GM12878 (cell line): ENCODE measurements at regions of chr12 and their contacts with region 1.

Region 1: DNA sequence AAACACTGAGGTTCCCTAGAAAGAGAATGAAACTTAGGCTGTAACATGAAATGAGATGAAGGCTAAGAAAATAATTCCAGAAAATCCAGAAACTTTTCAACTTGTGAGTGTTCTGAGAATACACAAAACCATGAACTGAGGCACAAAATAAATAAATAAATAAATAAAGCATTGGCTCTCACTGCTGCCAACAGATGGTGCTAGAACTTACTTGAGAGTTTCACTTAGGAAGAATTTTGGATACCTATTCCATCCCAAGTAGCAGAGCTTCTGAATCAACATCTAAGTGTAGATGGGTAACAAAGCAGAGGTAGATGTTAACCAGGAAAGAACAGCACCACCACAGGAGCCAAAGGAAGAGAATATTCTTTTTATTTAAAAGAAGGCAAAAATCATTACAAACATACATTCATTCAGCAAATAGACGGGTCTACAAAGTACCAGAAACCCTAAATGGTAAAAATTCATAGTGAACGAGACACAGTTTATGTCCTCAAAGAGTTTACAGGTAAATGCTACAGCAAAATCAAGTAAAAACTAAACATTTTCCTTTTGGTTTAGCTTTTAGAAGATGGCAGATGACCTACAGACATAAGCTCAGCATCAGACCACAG is 16.7 kb downstream of the EPS8 start:
- DNase-seq: no peak
- ATAC-seq: peak; percentile 4
- H3K4me3 ChIP-seq: no peak overlapping the region
- H3K27ac ChIP-seq: no peak overlapping the region
- H3K4me1 ChIP-seq: no peaks in the 10 kb centered on the region
- H3K27me3 ChIP-seq: no peaks in the 10 kb centered on the region
- CTCF ChIP-seq: peak; percentile 22 to 39 (median 30); a peak in 4 of 6 replicates
- EP300 ChIP-seq: no peak
- POLR2A ChIP-seq: no peak
- RAD21 ChIP-seq: peak; percentile 37; the same call in 1 of the 2 replicates

Region 2: GRCh38 chr12:15590180-15590826 is 182.2 kb before region 1 on chr12:
- CTCF ChIA-PET with region 1: interaction called, 21 read pairs
- POLR2A ChIA-PET with region 1: no interaction called
- RAD21 ChIA-PET with region 1: interaction called, 9 read pairs
- SMC1A ChIA-PET with region 1: interaction called, 11 read pairs
- in situ Hi-C with region 1: no loop called
- intact Hi-C with region 1: loop called (anchors 5 kb)
- DNase-seq: peak; percentile 46
- ATAC-seq: peak; percentile 97
- H3K4me3 ChIP-seq: peak overlapping the region; percentile 46; the same call in 1 of the 2 replicates
- H3K27ac ChIP-seq: no peak overlapping the region
- H3K4me1 ChIP-seq: peaks cover 4% of the 10 kb centered on the region; the same call in 1 of the 2 replicates
- H3K27me3 ChIP-seq: 0 out of 4 replicates have a peak, but pooled peaks cover 0 to 1% of the 10 kb centered on the region in 2 experiments
- CTCF ChIP-seq: peak; percentile 85 to 94 (median 86); a peak in 5 of 6 replicates
- EP300 ChIP-seq: no peak
- POLR2A ChIP-seq: no peak
- RAD21 ChIP-seq: peak; percentile 97

Region 3: GRCh38 chr12:15688202-15688736 is 84.2 kb before region 1 on chr12:
- CTCF ChIA-PET with region 1: interaction called, 4 read pairs
- POLR2A ChIA-PET with region 1: interaction called, 12 read pairs
- RAD21 ChIA-PET with region 1: interaction called, 10 read pairs
- SMC1A ChIA-PET with region 1: interaction called, 11 read pairs
- in situ Hi-C with region 1: no loop called
- intact Hi-C with region 1: loop called (anchors 2 kb)
- DNase-seq: no peak
- ATAC-seq: peak; percentile 85
- H3K4me3 ChIP-seq: no peak overlapping the region
- H3K27ac ChIP-seq: no peak overlapping the region
- H3K4me1 ChIP-seq: 0 out of 2 replicates have a peak, but pooled peaks cover 7% of the 10 kb centered on the region
- H3K27me3 ChIP-seq: no peaks in the 10 kb centered on the region
- CTCF ChIP-seq: no peak
- EP300 ChIP-seq: no peak
- POLR2A ChIP-seq: no peak
- RAD21 ChIP-seq: no peak

Region 4: GRCh38 chr12:15712823-15713660 is 59.5 kb before region 1 on chr12:
- CTCF ChIA-PET with region 1: interaction called, 3 read pairs
- POLR2A ChIA-PET with region 1: interaction called, 5 read pairs
- RAD21 ChIA-PET with region 1: interaction called, 15 read pairs
- SMC1A ChIA-PET with region 1: interaction called, 9 read pairs
- in situ Hi-C with region 1: no loop called
- intact Hi-C with region 1: no loop called
- DNase-seq: no peak
- ATAC-seq: peak; percentile 33
- H3K4me3 ChIP-seq: no peak overlapping the region
- H3K27ac ChIP-seq: no peak overlapping the region
- H3K4me1 ChIP-seq: no peaks in the 10 kb centered on the region
- H3K27me3 ChIP-seq: no peaks in the 10 kb centered on the region
- CTCF ChIP-seq: no peak
- EP300 ChIP-seq: no peak
- POLR2A ChIP-seq: no peak
- RAD21 ChIP-seq: no peak

Region 5: DNA sequence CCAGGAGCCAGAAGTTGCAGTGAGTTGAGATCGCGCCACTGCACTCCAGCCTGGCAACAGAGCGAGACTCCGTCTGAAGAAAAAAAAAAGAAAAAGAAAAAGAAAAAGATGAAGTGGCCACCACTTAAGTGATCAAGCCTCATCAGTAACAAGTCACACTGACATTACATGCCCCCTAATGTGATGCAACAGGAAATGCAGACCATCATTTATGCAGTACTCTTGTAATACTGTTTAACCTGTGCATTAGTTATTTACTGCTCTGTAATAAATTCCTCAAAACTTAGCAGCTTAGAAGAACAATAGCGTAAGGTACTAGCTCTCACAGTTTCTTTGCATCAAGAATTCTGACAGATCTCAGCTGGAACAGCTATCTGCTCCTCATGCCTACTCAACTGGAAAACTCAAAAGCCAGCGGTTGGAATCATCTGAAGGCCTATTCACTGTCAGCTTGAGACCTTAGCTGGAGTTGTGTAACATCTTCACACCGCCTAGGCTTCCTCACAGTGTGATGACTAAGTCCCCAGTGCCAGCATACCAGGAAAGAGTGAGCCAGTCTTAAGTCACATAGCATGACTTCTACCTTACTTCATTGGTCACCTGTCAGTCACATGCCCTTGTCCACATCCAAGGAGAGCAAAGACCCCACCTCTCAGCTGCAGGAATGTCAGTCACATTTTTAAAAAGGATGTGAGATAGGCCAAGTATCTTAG is 14.8 kb before region 1 on chr12:
- CTCF ChIA-PET with region 1: interaction called, 4 read pairs
- POLR2A ChIA-PET with region 1: interaction called, 15 read pairs
- RAD21 ChIA-PET with region 1: interaction called, 15 read pairs
- SMC1A ChIA-PET with region 1: interaction called, 39 read pairs
- in situ Hi-C with region 1: no loop called
- intact Hi-C with region 1: no loop called
- DNase-seq: no peak
- ATAC-seq: peak; percentile 83
- H3K4me3 ChIP-seq: no peak overlapping the region
- H3K27ac ChIP-seq: no peak overlapping the region
- H3K4me1 ChIP-seq: no peaks in the 10 kb centered on the region
- H3K27me3 ChIP-seq: no peaks in the 10 kb centered on the region
- CTCF ChIP-seq: no peak
- EP300 ChIP-seq: no peak
- POLR2A ChIP-seq: no peak
- RAD21 ChIP-seq: no peak

Region 6: DNA sequence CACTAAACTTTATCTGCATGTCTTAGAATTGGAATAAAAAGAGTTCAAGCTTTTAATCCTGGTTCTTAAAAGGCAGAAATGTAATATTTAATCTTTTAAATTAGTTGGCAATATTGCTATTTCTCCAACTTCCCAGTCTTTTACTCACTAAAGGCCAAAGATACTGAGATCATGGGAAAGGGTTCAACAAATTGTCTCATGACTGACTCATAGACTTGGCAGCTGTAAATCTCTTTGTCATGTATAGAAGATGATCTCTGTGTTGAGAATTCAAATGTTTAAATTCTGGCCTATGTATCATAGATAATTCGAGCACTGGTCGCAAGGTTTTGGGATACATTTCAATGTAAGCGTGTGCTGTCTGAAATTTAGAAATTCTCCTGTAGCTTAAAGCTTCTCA is 69.6 kb after region 1 on chr12:
- CTCF ChIA-PET with region 1: interaction called, 13 read pairs
- POLR2A ChIA-PET with region 1: no interaction called
- RAD21 ChIA-PET with region 1: no interaction called
- SMC1A ChIA-PET with region 1: interaction called, 4 read pairs
- in situ Hi-C with region 1: no loop called
- intact Hi-C with region 1: no loop called
- DNase-seq: no peak
- ATAC-seq: no peak
- H3K4me3 ChIP-seq: no peak overlapping the region
- H3K27ac ChIP-seq: no peak overlapping the region
- H3K4me1 ChIP-seq: no peaks in the 10 kb centered on the region
- H3K27me3 ChIP-seq: no peaks in the 10 kb centered on the region; a peak in 1 of 4 replicates
- CTCF ChIP-seq: no peak
- EP300 ChIP-seq: no peak
- POLR2A ChIP-seq: no peak
- RAD21 ChIP-seq: no peak